ENCODE measurements at regions of chr5 and their contacts with region 1.

Region 1: DNA sequence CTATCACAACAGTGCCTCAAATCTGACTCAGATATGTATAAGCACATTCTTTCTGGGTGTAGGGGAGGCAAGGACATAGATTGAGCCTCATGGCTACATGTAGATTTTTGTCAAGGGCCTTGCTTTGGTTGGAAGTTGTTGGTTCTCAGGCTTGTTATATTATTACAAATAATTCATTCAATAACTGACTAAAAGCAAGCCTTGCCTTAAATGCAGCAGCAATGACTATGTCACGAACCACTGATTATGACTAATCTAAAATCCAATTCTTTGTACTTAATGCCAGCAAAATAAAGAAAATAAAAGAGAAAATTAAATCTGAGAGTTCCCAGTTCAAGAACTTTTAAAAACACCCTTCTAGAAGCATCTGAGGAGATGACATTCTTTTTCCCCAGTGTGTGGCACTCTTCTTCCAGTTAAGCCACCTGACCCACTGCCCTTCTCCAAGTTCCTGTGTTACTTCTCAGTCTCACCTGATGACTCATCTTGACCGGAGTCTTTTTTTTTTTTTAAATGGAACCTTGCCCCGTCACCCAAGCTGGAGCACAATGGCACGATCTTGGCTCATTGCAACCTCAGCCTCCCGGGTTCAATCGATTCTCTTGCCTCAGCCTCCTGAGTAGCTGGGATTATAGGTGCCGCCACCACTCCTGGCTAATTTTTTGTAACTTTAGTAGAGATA is 223.9 kb upstream of the DAB2 start:
- DNase-seq: no peak

Region 2: GRCh38 chr5:38382898-38383297 is 1265.8 kb before region 1 on chr5:
- intact Hi-C with region 1: loop called in 1 of 2 experiments (anchors 5 kb)
- DNase-seq: no peak

Region 3: DNA sequence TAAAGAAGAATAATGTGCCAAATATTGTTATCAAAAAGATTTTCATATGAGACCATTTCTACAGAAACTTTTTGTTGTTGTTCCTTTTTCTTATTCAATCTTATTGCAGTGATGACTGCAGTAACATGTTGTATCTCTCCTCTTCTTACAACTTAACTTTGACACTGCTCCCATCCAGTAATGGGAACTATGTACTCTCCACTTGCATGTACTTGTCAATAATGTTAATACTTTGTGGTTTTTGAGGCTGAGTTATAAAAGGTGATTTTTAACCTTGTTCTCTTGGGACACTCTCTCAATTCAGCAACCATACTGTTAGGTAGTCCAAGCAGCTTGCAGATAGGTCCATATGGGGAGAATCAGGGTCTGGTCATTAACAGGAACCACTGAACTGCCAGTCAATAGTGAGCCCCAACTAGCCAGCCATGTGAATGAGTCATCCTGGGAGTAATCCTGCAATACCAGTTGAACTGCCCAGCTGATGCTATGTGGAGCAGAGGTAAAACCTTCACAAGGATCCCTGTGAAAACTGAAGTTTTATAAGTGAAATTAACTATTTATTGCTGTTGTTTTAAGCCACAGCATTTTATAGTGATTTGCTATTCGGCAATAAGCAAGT is 24.3 kb before region 1 on chr5:
- intact Hi-C with region 1: no loop called
- DNase-seq: no peak